ENCODE measurements at regions of chr14 and their contacts with region 1.

Region 1: DNA sequence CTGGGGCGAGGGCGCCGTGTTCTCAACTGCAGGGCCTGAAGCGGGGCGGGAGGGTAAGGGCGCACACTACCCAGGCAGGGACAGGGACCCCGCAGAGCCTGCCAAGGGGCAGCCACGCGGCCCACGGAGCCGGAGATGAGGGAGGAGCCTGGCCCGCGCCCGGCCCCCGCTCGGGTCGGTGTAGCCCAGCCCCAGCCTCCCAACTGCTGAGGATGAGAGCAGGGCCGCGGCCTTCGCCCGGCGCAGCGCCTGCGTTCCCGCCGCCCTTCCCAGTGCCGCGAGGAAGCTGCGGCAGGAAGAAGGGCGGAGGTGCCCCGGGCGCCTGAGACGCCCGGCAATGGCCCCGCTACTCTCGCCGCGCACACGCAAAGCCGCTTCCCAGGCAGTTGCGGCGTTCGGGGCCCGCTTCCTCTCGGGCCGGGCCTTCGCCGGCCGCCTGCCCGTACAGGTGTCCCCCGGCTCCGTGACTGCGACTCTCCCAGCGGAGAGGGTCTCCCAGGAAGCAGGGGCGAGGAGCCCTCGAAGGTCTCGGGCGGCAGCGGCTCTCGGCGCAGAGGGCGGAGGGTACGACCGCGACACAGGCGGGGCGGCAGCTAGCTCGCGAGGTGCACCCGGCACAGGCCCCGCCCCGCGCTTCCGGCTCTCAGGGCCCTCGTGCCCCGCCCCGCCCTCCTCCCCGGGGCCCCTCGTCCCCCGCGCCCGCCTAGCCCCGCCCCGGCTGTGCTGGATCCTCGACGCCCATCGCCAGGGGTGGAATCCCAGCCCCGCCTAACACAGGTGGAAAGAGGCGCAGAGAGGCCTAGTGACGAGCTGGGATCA is 24.8 kb upstream of the YY1 start:
- DNase-seq: peak; percentile 95 to 96
- H3K4me3 ChIP-seq: peak overlapping the region; percentile 89
- H3K4me3 Mint-ChIP-seq: peak overlapping the region; percentile 62
- H3K27ac Mint-ChIP-seq: peak overlapping the region; percentile 90
- H3K4me1 ChIP-seq: peaks cover 21% of the 10 kb centered on the region
- H3K4me1 Mint-ChIP-seq: peaks cover 8% of the 10 kb centered on the region
- H3K27me3 ChIP-seq: no peaks in the 10 kb centered on the region
- H3K27me3 Mint-ChIP-seq: no peaks in the 10 kb centered on the region
- CTCF ChIP-seq: no peak

Region 2: DNA sequence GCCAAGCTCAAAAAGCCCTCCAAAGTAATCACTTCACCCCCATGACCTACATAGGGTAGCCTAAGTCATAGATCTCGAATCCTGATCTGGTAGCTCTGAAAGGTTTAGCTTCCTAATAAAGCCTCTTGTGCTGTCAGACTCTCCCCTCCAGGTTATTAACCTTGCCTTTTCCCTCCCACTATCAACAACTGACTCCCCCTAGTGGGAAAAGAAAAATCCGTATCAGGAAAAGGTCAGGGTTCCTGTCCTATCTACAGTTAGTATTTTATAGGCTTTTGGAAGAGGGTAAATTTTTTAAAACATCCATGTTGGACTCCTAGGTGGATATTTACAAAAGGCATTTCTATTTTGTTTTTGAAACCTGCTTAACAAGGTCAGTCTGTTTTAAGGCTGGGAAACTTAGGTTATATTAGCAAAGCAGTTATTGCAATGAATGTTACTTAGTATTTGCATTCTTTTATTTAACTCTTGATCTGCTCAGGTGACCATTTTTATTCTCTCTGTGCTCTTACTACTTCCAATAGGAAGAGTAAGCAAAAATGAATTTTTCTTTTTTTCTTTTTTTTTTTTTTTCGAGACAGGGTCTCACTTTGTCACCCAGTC is 32.8 kb after region 1 on chr14:
- CTCF ChIA-PET with region 1: interaction called, 5 read pairs
- POLR2A ChIA-PET with region 1: interaction called, 3 read pairs
- intact Hi-C with region 1: loop called (anchors 2 kb)
- DNase-seq: peak in 1 of 2 experiments; percentile 80
- H3K4me3 ChIP-seq: no peak overlapping the region
- H3K4me3 Mint-ChIP-seq: no peak overlapping the region
- H3K27ac Mint-ChIP-seq: no peak overlapping the region
- H3K4me1 ChIP-seq: peaks cover 16% of the 10 kb centered on the region
- H3K4me1 Mint-ChIP-seq: peaks cover 9% of the 10 kb centered on the region
- H3K27me3 ChIP-seq: no peaks in the 10 kb centered on the region
- H3K27me3 Mint-ChIP-seq: no peaks in the 10 kb centered on the region
- CTCF ChIP-seq: peak; percentile 58 to 75

Region 3: DNA sequence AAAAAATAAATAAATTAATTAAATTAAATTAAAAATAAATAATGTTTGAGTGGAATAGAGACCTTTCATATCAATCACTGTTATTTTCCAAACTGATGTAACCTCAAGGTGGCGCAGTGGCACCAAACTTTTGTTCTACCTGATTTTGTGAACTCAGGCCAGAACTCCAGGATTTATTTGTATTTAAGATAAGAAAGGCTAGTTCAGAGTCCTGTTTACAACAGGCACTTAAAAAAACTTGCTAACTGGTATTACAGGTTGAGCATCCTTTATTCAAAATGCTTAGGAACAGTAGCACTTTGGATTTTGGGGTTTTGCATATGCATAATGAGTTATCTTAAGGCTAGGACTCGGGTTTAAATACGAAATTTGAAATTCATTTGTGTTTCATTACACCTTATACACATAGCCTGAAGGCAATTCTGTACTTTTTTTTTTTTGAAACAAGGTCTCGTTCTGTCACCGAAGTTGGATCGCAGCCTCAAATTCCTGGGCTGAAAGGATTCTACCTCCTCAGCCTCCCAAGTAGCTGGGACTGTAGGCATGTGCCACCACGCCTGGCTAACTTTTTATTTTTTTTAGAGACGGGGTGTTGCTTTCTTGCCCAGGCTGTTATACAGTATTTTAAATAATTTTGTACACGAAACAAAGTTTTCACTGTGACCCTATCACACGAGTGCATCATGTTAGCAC is 57.2 kb after region 1 on chr14:
- CTCF ChIA-PET with region 1: no interaction called
- POLR2A ChIA-PET with region 1: no interaction called
- intact Hi-C with region 1: no loop called
- DNase-seq: peak in 1 of 2 experiments; percentile 75
- H3K4me3 ChIP-seq: no peak overlapping the region
- H3K4me3 Mint-ChIP-seq: no peak overlapping the region
- H3K27ac Mint-ChIP-seq: peak overlapping the region; percentile 53
- H3K4me1 ChIP-seq: peaks cover 7% of the 10 kb centered on the region
- H3K4me1 Mint-ChIP-seq: peaks cover 17% of the 10 kb centered on the region
- H3K27me3 ChIP-seq: no peaks in the 10 kb centered on the region
- H3K27me3 Mint-ChIP-seq: no peaks in the 10 kb centered on the region
- CTCF ChIP-seq: peak; percentile 36 to 50

Region 4: GRCh38 chr14:100383727-100384158 is 169.6 kb after region 1 on chr14:
- CTCF ChIA-PET with region 1: no interaction called
- POLR2A ChIA-PET with region 1: no interaction called
- intact Hi-C with region 1: no loop called
- DNase-seq: peak; percentile 56 to 70
- H3K4me3 ChIP-seq: no peak overlapping the region
- H3K4me3 Mint-ChIP-seq: no peak overlapping the region
- H3K27ac Mint-ChIP-seq: no peak overlapping the region
- H3K4me1 ChIP-seq: 0 out of 2 replicates have a peak, but pooled peaks cover 8% of the 10 kb centered on the region
- H3K4me1 Mint-ChIP-seq: no peaks in the 10 kb centered on the region
- H3K27me3 ChIP-seq: no peaks in the 10 kb centered on the region
- H3K27me3 Mint-ChIP-seq: no peaks in the 10 kb centered on the region
- CTCF ChIP-seq: peak; percentile 79 to 81

Region 5: DNA sequence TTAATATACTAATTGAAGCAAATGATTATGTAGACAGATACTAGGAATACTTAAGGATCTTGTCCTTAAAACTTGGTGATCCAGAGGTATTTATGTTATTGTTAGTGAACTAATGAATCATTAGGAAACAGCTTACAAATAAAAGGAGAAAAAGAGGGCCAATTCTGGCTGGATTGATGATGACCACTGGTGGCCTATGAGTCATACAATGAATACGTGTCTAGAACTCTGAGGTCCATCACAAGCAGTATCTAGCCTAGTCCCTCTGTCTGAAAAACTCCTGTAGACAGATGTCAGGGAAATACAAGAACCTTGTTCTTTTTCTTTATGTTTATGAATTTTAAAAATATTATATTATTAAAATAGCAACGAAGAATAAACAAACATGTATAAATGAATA is 741.0 kb after region 1 on chr14:
- CTCF ChIA-PET with region 1: no interaction called
- POLR2A ChIA-PET with region 1: no interaction called
- intact Hi-C with region 1: no loop called
- DNase-seq: no peak
- H3K4me3 ChIP-seq: no peak overlapping the region
- H3K4me3 Mint-ChIP-seq: no peak overlapping the region
- H3K27ac Mint-ChIP-seq: no peak overlapping the region
- H3K4me1 ChIP-seq: no peaks in the 10 kb centered on the region
- H3K4me1 Mint-ChIP-seq: no peaks in the 10 kb centered on the region
- H3K27me3 ChIP-seq: no peaks in the 10 kb centered on the region
- H3K27me3 Mint-ChIP-seq: no peaks in the 10 kb centered on the region
- CTCF ChIP-seq: no peak